AG04450 (cell line): ENCODE measurements at regions of chr15 and their contacts with region 1.

Region 1: GRCh38 chr15:40593588-40594428 is at the start of gene KNL1:
- DNase-seq: peak; percentile 88
- H3K4me3 ChIP-seq: peak within 1 kb of the TSS; percentile 84
- H3K27ac ChIP-seq: peak within 1 kb of the TSS; percentile 92
- H3K27me3 ChIP-seq: no peaks in the 10 kb centered on the region
- CTCF ChIP-seq: no peak
- polyA plus RNA-seq, gene KNL1: 3.0 and 5.6 TPM in 2 replicates

Region 2: GRCh38 chr15:40550341-40551037 is 43.3 kb before region 1 on chr15:
- CTCF ChIA-PET with region 1: interaction called, 10 read pairs
- POLR2A ChIA-PET with region 1: no interaction called
- DNase-seq: no peak
- H3K4me3 ChIP-seq: no peak overlapping the region
- H3K27ac ChIP-seq: no peak overlapping the region
- H3K27me3 ChIP-seq: no peaks in the 10 kb centered on the region
- CTCF ChIP-seq: no peak

Region 3: DNA sequence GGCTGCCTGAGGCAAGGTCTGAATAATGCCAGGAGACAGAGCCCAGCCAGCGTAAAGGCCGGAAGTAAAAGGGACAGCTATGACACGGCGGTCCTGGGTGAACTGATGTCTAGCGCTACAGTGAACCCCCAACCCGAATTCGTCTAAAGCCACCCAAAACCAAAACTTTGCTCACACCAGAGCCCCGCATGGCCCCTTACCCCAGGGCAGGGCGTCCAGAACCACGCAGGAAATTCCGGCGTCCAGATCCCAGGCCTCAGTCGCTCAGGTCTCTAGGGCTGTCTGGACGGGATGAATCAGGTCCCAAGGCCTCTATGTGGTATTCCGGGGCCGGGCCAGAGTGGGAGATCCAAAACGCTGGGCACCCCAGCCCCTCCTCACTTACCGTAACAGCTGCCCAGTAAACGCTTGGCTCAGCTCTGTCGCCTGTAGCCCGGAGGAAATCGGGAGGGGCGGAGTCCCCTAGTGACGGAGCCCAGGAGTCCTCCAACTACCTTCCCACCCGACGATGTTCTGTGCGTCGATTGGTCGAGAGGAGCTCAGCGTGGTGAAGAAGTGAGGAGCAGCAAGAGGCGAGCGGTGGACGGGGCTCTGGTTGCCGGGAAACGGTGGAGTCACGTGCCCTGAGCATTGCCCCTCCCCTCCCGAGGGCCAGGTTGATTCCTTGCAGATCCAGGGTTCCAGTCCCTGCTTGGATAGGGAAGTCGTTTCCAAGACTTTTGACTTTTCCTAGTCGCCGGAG is 29.0 kb before region 1 on chr15 and contains the start of gene CCDC32:
- CTCF ChIA-PET with region 1: interaction called, 12 read pairs
- POLR2A ChIA-PET with region 1: interaction called, 4 read pairs
- DNase-seq: peak; percentile 93
- H3K4me3 ChIP-seq: peak within 1 kb of the TSS; percentile 92
- H3K27ac ChIP-seq: peak within 1 kb of the TSS; percentile 75
- H3K27me3 ChIP-seq: no peaks in the 10 kb centered on the region
- CTCF ChIP-seq: no peak
- polyA plus RNA-seq, gene CCDC32: 14.0 and 16.7 TPM in 2 replicates

Region 4: GRCh38 chr15:40582726-40583246 is 11.0 kb before region 1 on chr15:
- CTCF ChIA-PET with region 1: interaction called, 17 read pairs
- POLR2A ChIA-PET with region 1: no interaction called
- DNase-seq: no peak
- H3K4me3 ChIP-seq: no peak overlapping the region
- H3K27ac ChIP-seq: no peak overlapping the region
- H3K27me3 ChIP-seq: no peaks in the 10 kb centered on the region
- CTCF ChIP-seq: no peak

Region 5: GRCh38 chr15:40613080-40613479 is 19.3 kb after region 1 on chr15:
- CTCF ChIA-PET with region 1: interaction called, 10 read pairs
- POLR2A ChIA-PET with region 1: no interaction called
- DNase-seq: no peak
- H3K4me3 ChIP-seq: no peak overlapping the region
- H3K27ac ChIP-seq: no peak overlapping the region
- H3K27me3 ChIP-seq: no peaks in the 10 kb centered on the region
- CTCF ChIP-seq: no peak

Region 6: DNA sequence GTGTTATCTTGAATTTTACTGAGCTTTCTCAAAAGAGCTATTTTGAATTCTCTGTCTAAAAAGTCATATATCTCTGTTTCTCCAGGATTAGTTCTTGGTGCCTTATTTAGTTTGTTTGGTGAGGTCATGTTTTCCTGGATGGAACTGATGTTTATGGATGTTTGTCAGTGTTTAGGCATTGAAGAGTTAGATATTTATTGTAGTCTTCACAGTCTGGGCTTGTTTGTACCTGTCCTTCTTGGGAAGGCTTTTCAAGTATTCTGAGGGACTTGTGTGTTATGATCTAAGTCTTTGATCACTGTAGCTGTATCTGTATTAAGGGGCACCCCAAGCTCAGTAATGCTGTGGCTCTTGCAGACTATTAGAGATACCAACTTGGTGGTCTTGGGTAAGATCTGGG is 90.6 kb after region 1 on chr15:
- CTCF ChIA-PET with region 1: interaction called, 11 read pairs
- POLR2A ChIA-PET with region 1: no interaction called
- DNase-seq: no peak
- H3K4me3 ChIP-seq: no peak overlapping the region
- H3K27ac ChIP-seq: no peak overlapping the region
- H3K27me3 ChIP-seq: no peaks in the 10 kb centered on the region
- CTCF ChIP-seq: no peak

Region 7: DNA sequence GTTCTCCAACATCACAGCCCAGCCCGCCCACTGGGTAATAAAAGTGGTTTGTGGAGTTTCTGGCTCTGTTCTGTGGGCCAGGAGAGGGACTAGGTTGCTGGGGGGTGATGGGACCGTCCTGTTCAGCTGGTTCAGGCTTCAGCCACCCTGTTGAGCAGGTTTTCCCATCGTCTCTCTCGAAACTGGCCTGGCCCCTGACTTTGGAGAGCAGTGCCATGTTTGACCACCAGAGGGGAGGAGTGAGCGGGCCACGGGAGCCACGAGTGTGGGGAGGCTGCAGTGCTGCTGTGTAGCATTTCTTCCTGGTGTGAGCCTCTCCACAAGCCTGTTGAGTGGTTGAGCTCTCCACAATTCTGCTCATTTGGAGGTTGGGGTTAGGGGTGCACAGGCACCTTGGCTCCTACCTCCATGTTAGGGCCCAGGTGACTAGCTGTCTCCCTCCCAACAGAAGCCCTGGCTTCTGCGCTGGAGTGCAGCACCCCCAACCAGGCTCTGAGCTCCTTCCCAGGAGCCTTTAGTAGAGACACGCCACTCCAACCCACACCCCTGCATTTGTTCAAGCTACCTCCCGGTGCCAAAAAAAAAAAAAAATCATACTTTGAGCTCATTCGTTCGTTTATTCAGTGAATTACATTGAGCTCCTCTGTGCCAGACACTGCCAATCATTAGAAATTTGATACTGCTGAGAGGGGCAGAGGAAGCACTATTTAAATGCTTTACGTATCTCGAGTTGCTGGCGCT is 264.0 kb after region 1 on chr15:
- CTCF ChIA-PET with region 1: interaction called, 11 read pairs
- POLR2A ChIA-PET with region 1: no interaction called
- DNase-seq: peak; percentile 30
- H3K4me3 ChIP-seq: no peak overlapping the region
- H3K27ac ChIP-seq: no peak overlapping the region
- H3K27me3 ChIP-seq: peaks cover 20% of the 10 kb centered on the region
- CTCF ChIP-seq: peak; percentile 98

Region 8: GRCh38 chr15:41104234-41104633 is 510.4 kb after region 1 on chr15:
- CTCF ChIA-PET with region 1: no interaction called
- POLR2A ChIA-PET with region 1: no interaction called
- DNase-seq: peak; percentile 11
- H3K4me3 ChIP-seq: no peak overlapping the region
- H3K27ac ChIP-seq: no peak overlapping the region
- H3K27me3 ChIP-seq: no peaks in the 10 kb centered on the region
- CTCF ChIP-seq: no peak